ENCODE measurements at regions of chr5 and their contacts with region 1.

Region 1: GRCh38 chr5:142881076-142881783 is 111.1 kb downstream of the ARHGAP26 start:
- DNase-seq: no peak
- H3K4me3 ChIP-seq: no peak overlapping the region
- H3K27ac ChIP-seq: no peak overlapping the region
- H3K4me1 ChIP-seq: peaks cover 4 to 11% of the 10 kb centered on the region in 2 experiments; a peak in 2 of 4 replicates
- H3K27me3 ChIP-seq: no peaks in the 10 kb centered on the region
- CTCF ChIP-seq: no peak
- EP300 ChIP-seq: no peak
- RAD21 ChIP-seq: no peak

Region 2: GRCh38 chr5:142324871-142325724 is 556.1 kb before region 1 on chr5 and contains the start of gene SPRY4:
- CTCF ChIA-PET with region 1: no interaction called
- POLR2A ChIA-PET with region 1: no interaction called
- DNase-seq: peak; percentile 95
- H3K4me3 ChIP-seq: peak within 1 kb of the TSS; percentile 93 to 95
- H3K27ac ChIP-seq: peak within 1 kb of the TSS; percentile 98
- H3K4me1 ChIP-seq: peaks cover 31 to 50% of the 10 kb centered on the region in 2 experiments
- H3K27me3 ChIP-seq: no peaks in the 10 kb centered on the region
- CTCF ChIP-seq: 0 out of 2 replicates have a peak, but pooled peaks have one; percentile 5
- EP300 ChIP-seq: peak; percentile 36 to 51; a peak in 2 of 4 replicates
- RAD21 ChIP-seq: peak; percentile 39
- polyA plus RNA-seq, gene SPRY4: 12.2 and 18.0 TPM in 2 replicates

Region 3: GRCh38 chr5:142748568-142749249 is 132.5 kb before region 1 on chr5:
- CTCF ChIA-PET with region 1: interaction called, 185 read pairs
- POLR2A ChIA-PET with region 1: no interaction called
- DNase-seq: peak; percentile 16
- H3K4me3 ChIP-seq: no peak overlapping the region; a peak in 1 of 4 replicates
- H3K27ac ChIP-seq: peak overlapping the region in 1 of 2 experiments; percentile 70; a peak in 2 of 4 replicates
- H3K4me1 ChIP-seq: peaks cover 11 to 26% of the 10 kb centered on the region in 2 experiments
- H3K27me3 ChIP-seq: no peaks in the 10 kb centered on the region
- CTCF ChIP-seq: peak; percentile 49
- EP300 ChIP-seq: no peak
- RAD21 ChIP-seq: peak; percentile 80

Region 4: GRCh38 chr5:142783601-142784341 is 97.5 kb before region 1 on chr5:
- CTCF ChIA-PET with region 1: interaction called, 21 read pairs
- POLR2A ChIA-PET with region 1: no interaction called
- DNase-seq: peak; percentile 76
- H3K4me3 ChIP-seq: no peak overlapping the region
- H3K27ac ChIP-seq: peak overlapping the region; percentile 17 to 93; a peak in 3 of 4 replicates
- H3K4me1 ChIP-seq: peaks cover 35 to 54% of the 10 kb centered on the region in 2 experiments
- H3K27me3 ChIP-seq: no peaks in the 10 kb centered on the region
- CTCF ChIP-seq: peak; percentile 8; the same call in 1 of the 2 replicates
- EP300 ChIP-seq: peak in 1 of 2 experiments; percentile 60; a peak in 1 of 4 replicates
- RAD21 ChIP-seq: peak; percentile 13; the same call in 1 of the 2 replicates

Region 5: DNA sequence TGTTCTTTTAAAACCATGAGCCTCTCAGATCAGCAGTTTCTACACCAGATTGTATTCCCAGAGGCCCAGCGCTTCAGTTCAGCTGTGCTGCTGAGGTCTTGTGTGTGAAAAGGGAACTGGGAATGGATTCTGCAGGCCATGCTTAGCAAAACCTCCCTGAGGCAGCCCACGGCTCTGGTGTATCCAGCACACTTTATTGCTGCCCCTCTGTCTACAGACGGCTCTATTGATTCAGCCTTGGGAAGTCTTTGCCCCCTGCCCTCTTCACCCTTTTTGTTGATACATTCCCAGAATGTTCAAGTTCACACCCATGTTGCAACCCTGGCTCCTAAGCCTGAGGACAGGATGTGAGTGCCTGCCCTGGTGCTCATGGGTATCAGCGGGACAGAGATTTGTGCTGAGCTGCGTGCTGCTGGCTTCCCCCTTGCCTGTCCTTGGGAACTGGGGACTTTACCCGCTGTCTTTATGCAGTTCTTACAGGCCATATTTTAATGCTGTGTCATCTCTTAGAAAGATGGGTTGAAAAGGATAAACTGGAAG is 73.8 kb before region 1 on chr5:
- CTCF ChIA-PET with region 1: interaction called, 15 read pairs
- POLR2A ChIA-PET with region 1: no interaction called
- DNase-seq: no peak
- H3K4me3 ChIP-seq: no peak overlapping the region
- H3K27ac ChIP-seq: peak overlapping the region in 1 of 2 experiments; percentile 89; a peak in 2 of 4 replicates
- H3K4me1 ChIP-seq: peaks cover 6 to 50% of the 10 kb centered on the region in 2 experiments; a peak in 3 of 4 replicates
- H3K27me3 ChIP-seq: no peaks in the 10 kb centered on the region
- CTCF ChIP-seq: no peak
- EP300 ChIP-seq: no peak
- RAD21 ChIP-seq: no peak

Region 6: DNA sequence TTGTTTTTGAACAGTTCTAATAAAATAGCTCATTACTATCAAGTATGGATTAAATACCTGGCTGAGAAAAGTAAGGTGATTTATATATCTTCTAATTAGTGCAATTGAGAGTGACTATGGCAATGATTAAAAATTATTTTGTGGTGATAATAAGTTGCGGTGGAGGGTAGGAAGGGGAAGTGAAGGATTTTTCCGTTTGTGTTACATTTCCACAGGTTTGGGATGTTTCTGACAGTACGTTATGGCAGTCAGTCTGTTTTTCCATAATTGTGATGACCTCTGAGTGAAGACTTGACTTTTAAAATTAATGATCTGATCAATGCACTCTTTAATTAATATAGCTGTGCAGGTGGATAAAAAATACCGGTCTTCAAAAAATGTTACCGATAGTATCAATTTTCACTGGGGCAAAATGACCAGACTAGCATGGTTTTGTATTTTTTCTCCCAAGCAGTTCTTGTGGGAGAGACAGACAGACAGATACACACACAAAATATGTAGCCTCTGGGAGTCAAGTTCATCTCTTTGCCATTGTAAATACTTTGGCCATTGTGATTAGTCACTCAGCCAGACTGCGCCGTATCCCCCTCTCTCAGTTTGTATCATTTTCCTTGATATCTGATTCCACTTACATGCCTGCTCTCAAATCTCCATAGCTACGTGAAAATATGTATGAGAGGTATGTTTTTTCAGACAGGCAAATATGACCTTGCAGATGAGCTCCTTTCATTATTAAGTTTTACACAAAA is 50.8 kb before region 1 on chr5:
- CTCF ChIA-PET with region 1: no interaction called
- POLR2A ChIA-PET with region 1: no interaction called
- DNase-seq: no peak
- H3K4me3 ChIP-seq: peak overlapping the region; percentile 1 to 28; a peak in 1 of 4 replicates
- H3K27ac ChIP-seq: peak overlapping the region; percentile 61 to 93
- H3K4me1 ChIP-seq: peaks cover 45 to 55% of the 10 kb centered on the region in 2 experiments
- H3K27me3 ChIP-seq: no peaks in the 10 kb centered on the region
- CTCF ChIP-seq: no peak
- EP300 ChIP-seq: peak in 1 of 2 experiments; percentile 63; a peak in 1 of 4 replicates
- RAD21 ChIP-seq: no peak

Region 7: GRCh38 chr5:142852416-142853198 is 28.6 kb before region 1 on chr5:
- CTCF ChIA-PET with region 1: interaction called, 12 read pairs
- POLR2A ChIA-PET with region 1: no interaction called
- DNase-seq: no peak
- H3K4me3 ChIP-seq: no peak overlapping the region
- H3K27ac ChIP-seq: no peak overlapping the region
- H3K4me1 ChIP-seq: peaks cover 3 to 12% of the 10 kb centered on the region in 2 experiments; a peak in 1 of 4 replicates
- H3K27me3 ChIP-seq: no peaks in the 10 kb centered on the region
- CTCF ChIP-seq: no peak
- EP300 ChIP-seq: no peak
- RAD21 ChIP-seq: no peak

Region 8: GRCh38 chr5:142900927-142901326 is 19.7 kb after region 1 on chr5:
- CTCF ChIA-PET with region 1: interaction called, 12 read pairs
- POLR2A ChIA-PET with region 1: no interaction called
- DNase-seq: no peak
- H3K4me3 ChIP-seq: no peak overlapping the region
- H3K27ac ChIP-seq: no peak overlapping the region
- H3K4me1 ChIP-seq: peaks cover 3 to 8% of the 10 kb centered on the region in 2 experiments; a peak in 2 of 4 replicates
- H3K27me3 ChIP-seq: no peaks in the 10 kb centered on the region
- CTCF ChIP-seq: no peak
- EP300 ChIP-seq: no peak
- RAD21 ChIP-seq: no peak

Region 9: DNA sequence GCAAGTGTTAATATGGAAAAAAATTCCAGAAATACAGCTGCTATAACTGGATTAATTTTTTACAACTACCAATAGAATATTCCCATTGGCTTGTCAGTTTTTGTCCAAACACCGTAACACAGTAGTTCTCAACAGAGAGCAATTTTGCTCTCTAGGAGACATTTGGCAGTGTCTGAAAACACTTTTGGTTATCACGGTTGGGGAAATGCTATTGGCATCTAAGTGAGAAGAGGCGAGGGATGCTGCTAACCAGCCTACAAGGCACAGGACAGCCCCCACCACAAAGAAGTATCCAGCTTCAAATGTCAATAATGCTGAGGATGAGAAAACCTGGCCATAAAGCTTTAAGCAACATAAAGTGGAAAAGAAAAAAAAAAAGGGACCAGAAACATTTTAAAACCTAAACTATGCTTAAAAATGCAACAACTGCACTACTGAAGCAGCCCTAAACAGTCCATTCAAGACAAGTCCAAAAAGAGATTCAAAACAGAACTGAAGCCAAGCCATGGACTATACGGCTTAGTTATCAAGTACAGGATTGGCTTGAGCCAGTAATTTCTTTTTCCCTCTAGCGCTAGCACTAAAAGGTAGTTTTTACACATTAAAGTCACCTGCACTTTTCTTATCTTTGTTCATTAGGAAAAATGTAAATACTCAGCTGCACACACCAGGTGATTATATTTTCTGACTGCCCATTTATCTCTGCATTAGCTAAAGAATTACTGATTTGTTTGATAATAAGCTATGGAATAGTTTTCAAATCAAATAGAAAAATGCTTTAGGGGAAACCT is 438.4 kb after region 1 on chr5:
- CTCF ChIA-PET with region 1: no interaction called
- POLR2A ChIA-PET with region 1: no interaction called
- DNase-seq: peak; percentile 16
- H3K4me3 ChIP-seq: no peak overlapping the region; a peak in 1 of 4 replicates
- H3K27ac ChIP-seq: peak overlapping the region in 1 of 2 experiments; percentile 91; a peak in 2 of 4 replicates
- H3K4me1 ChIP-seq: peaks cover 14 to 23% of the 10 kb centered on the region in 2 experiments; a peak in 3 of 4 replicates
- H3K27me3 ChIP-seq: no peaks in the 10 kb centered on the region
- CTCF ChIP-seq: no peak
- EP300 ChIP-seq: peak in 1 of 2 experiments; percentile 87; a peak in 2 of 4 replicates
- RAD21 ChIP-seq: peak; percentile 6; the same call in 1 of the 2 replicates